WTC11 (cell line): ENCODE measurements at regions of chr19 and their contacts with region 1.

Region 1: DNA sequence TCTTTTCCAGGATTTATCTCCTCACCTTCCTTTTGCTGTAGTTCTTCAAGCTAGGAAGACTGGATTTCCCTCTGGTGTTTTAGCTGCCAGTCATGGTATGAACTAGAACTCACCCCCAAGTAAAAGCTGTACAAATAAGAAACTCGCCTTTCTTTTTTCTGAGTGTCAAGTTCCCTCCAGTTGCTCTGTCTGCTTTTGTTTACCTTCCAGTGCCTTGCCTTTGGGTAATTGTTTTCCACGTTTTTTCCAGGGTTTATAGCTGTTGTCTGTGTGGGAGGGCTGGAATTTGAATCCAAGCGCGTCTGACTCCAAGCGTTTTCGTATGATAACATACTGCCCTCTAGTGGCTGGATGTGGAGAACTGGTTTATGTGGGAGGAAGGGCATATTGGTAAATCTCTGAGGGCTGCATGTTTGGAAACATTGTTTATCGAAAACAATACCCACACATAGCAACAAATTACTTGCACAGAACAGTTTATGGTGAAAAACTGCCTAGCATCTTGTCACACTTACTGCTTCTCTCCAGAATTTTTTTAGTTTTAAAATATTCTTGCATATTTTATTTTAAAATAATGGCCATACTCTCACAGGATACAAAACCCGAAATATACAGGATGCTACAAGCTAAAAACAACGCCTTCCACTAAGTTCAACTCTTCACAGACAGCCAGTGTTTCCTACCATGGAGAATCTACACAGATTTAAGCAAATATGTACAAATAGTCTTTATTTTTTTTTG is 19.2 kb downstream of the RCN3 start:
- DNase-seq: peak; percentile 71
- ATAC-seq: peak; percentile 83
- H3K4me3 Mint-ChIP-seq: peak overlapping the region; percentile 52
- H3K27ac Mint-ChIP-seq: peak overlapping the region; percentile 67
- H3K4me1 Mint-ChIP-seq: peaks cover 4% of the 10 kb centered on the region
- H3K27me3 Mint-ChIP-seq: no peaks in the 10 kb centered on the region
- CTCF ChIP-seq: peak; percentile 72

Region 2: GRCh38 chr19:49479975-49480628 is 66.9 kb before region 1 on chr19:
- CTCF ChIA-PET with region 1: interaction called, 19 read pairs
- POLR2A ChIA-PET with region 1: interaction called, 4 read pairs
- DNase-seq: no peak
- ATAC-seq: no peak
- H3K4me3 Mint-ChIP-seq: 0 out of 2 replicates have a peak overlapping the region, but pooled peaks have one; percentile 16
- H3K27ac Mint-ChIP-seq: no peak overlapping the region
- H3K4me1 Mint-ChIP-seq: peaks cover 10% of the 10 kb centered on the region
- H3K27me3 Mint-ChIP-seq: peaks cover 10% of the 10 kb centered on the region
- CTCF ChIP-seq: no peak

Region 3: GRCh38 chr19:49528211-49528771 is 18.7 kb before region 1 on chr19:
- CTCF ChIA-PET with region 1: interaction called, 62 read pairs
- POLR2A ChIA-PET with region 1: interaction called, 6 read pairs
- DNase-seq: peak; percentile 26
- ATAC-seq: peak; percentile 25; the same call in 1 of the 2 replicates
- H3K4me3 Mint-ChIP-seq: peak overlapping the region; percentile 70
- H3K27ac Mint-ChIP-seq: no peak overlapping the region
- H3K4me1 Mint-ChIP-seq: peaks cover 21% of the 10 kb centered on the region
- H3K27me3 Mint-ChIP-seq: peaks cover 19% of the 10 kb centered on the region
- CTCF ChIP-seq: no peak

Region 4: DNA sequence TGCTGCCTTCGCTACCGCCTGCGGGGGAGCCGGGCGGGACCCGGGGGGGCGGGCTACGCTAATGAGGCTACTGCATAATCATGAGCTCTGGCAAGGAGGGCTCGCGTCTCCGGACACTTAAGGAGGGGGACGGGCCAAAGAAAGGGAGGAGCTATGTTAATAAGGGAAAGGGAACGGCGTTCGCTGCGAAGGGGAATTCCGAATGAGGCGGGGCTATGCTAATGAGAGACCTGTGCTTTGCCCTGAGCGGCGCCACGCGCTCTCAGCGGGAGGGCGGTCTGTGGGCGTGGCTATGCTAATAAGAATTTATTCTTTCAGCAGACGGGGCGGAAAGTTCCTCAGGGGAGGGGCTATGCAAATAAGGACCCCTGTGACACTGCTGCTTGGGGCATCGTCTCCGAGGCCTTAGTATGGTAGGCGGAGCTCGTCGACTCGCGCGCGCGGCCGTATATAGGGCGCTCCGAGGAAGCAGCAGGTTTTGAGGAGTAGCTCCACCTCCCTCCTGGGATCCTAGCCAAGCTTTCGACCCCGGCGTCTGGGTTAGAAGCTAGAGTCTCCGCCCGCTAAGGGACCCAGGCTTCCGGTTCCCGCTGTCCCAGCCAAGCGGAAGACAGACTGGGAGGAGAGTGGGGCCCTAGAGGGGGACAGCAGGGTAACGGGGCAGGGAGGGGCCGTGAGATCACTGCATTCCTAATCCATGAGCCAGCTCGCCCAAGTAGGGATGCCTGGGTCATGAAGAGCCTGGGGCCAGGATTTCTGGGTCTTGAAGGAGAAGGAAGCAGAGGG is 93.3 kb after region 1 on chr19 and contains the start of gene RRAS:
- CTCF ChIA-PET with region 1: interaction called, 12 read pairs
- POLR2A ChIA-PET with region 1: no interaction called
- DNase-seq: peak; percentile 100
- ATAC-seq: peak; percentile 76
- H3K4me3 Mint-ChIP-seq: peak within 1 kb of the TSS; percentile 99
- H3K27ac Mint-ChIP-seq: peak within 1 kb of the TSS; percentile 99
- H3K4me1 Mint-ChIP-seq: peaks cover 62% of the 10 kb centered on the region
- H3K27me3 Mint-ChIP-seq: peaks cover 32% of the 10 kb centered on the region
- CTCF ChIP-seq: no peak
- total RNA-seq, gene RRAS: 11.4 to 17.9 TPM (median 15.7 TPM) in 3 replicates

Region 5: GRCh38 chr19:49676690-49677231 is 129.8 kb after region 1 on chr19:
- CTCF ChIA-PET with region 1: interaction called, 11 read pairs
- POLR2A ChIA-PET with region 1: no interaction called
- DNase-seq: peak; percentile 100
- ATAC-seq: peak; percentile 70
- H3K4me3 Mint-ChIP-seq: peak overlapping the region; percentile 88
- H3K27ac Mint-ChIP-seq: peak overlapping the region; percentile 100
- H3K4me1 Mint-ChIP-seq: peaks cover 31% of the 10 kb centered on the region
- H3K27me3 Mint-ChIP-seq: no peaks in the 10 kb centered on the region
- CTCF ChIP-seq: no peak